ENCODE measurements at regions of chr14 and their contacts with region 1.

Region 1: DNA sequence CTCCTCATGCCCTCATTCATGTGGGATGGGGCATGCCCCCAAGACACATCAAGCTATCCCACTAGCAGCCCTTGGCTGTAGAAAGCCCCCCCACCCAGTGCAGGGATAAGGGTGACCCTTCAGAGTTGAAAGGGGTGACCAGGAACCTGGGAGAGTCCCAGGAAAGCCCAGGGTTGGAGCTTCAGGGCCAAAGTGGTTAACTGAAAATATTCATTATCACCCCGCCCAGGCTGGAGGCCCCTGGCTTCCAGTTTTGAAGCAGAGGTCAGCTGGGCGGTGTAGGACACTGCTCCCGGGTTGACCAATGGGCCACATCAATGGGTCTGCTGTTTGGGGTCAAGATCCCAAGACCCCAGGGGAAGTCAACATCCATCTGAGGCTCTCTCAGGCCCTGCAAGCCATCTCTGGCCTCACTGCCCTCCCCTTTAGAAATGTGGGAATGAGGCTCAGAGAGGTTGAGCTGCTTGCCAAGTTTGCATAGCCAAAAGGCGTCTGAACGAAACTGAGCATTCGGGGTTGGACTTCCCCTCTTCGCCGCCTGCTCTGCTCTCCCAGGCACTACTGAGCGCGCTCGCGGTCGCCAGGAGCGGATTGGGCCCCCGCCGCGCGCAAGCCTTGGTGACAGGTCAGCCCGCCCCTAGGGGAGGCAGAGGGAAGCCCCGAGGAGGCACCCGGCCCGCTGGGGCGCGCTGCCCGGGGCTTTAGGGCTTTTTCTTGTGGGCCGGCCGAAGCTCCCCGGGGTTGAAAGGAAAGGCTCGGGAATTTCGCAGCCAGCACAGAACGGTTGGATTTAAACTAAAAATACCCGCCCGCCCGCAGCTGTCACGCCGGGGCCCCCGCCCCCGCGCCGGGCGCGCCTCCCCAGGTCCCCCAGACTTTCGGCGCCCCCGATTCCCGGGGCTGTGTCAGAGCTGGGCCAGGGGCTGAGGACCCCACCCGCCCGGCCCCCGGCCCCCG is 576 bp downstream of the SYNE3 start:
- DNase-seq: peak; percentile 88
- H3K4me3 ChIP-seq: peak overlapping the region; percentile 64
- H3K27ac ChIP-seq: no peak overlapping the region
- H3K4me1 ChIP-seq: peaks cover 57% of the 10 kb centered on the region
- CTCF ChIP-seq: peak; percentile 71

Region 2: GRCh38 chr14:95402176-95402575 is 113.7 kb before region 1 on chr14:
- CTCF ChIA-PET with region 1: no interaction called
- POLR2A ChIA-PET with region 1: no interaction called
- intact Hi-C with region 1: no loop called
- DNase-seq: no peak
- H3K4me3 ChIP-seq: no peak overlapping the region
- H3K27ac ChIP-seq: no peak overlapping the region
- H3K4me1 ChIP-seq: no peaks in the 10 kb centered on the region
- CTCF ChIP-seq: no peak

Region 3: DNA sequence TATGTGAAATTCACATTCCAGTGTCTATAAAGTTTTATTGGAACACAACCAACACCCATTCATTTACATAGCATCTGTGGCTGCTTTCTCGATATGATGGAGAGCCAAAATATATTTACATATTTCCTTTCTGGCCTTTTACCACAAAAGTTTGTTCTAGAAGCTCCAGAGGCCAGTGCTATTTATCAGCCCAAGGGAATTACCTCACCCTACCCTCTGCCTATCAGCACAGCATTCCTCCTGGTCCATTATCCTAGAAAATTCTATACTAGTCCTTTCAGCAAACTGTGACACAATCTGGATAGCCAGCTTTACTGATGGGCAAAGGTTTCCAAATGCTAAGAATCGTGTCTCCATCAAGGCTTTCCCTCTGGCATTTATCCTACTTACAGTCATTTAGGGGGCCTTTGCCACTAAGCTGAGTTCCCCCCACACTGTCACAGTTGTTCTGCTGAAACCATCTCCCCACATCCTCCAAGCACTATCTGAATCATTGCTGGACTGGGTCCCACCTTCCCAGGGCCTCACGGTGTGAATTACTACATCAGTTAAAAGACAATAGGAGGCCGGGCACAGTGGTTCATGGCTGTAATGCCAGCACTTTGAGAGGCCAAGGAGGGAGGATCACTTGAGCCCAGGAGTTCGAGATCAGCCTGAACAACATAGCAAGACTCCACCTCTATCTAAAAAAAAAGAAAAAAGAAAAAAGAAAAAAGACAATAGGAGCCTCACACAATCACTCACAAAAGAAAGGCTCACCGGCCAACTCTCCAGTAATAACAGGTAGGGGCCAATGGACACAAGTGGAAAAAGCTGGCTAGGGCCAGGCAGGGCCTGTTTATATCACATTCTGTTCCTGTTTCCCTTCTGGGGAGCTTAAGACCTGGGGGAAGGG is 11.5 kb before region 1 on chr14:
- CTCF ChIA-PET with region 1: interaction called, 5 read pairs
- POLR2A ChIA-PET with region 1: interaction called, 30 read pairs
- intact Hi-C with region 1: no loop called
- DNase-seq: no peak
- H3K4me3 ChIP-seq: no peak overlapping the region
- H3K27ac ChIP-seq: no peak overlapping the region
- H3K4me1 ChIP-seq: peaks cover 22% of the 10 kb centered on the region
- CTCF ChIP-seq: no peak

Measured in OCI-LY7 (cell line).